Activated CD4-positive, alpha-beta T cell treated with anti-CD3 and anti-CD28 coated beads for 36 hours (primary cell): ENCODE measurements at regions of chr7 and their contacts with region 1.

Region 1: GRCh38 chr7:5193880-5194279 is 3.8 kb downstream of the WIPI2 start:
- DNase-seq: no peak
- ATAC-seq: no peak
- H3K4me3 Mint-ChIP-seq: no peak overlapping the region
- H3K27ac Mint-ChIP-seq: peak overlapping the region; percentile 6
- H3K4me1 Mint-ChIP-seq: peaks cover 21% of the 10 kb centered on the region
- H3K27me3 Mint-ChIP-seq: no peaks in the 10 kb centered on the region

Region 2: GRCh38 chr7:4973728-4974198 is 220.1 kb before region 1 on chr7:
- CTCF ChIA-PET with region 1: no interaction called
- POLR2A ChIA-PET with region 1: no interaction called
- intact Hi-C with region 1: loop called in 1 of 2 experiments (anchors 1 kb)
- DNase-seq: peak; percentile 96
- ATAC-seq: peak; percentile 98
- H3K4me3 Mint-ChIP-seq: peak overlapping the region; percentile 97
- H3K27ac Mint-ChIP-seq: peak overlapping the region; percentile 92
- H3K4me1 Mint-ChIP-seq: peaks cover 31% of the 10 kb centered on the region
- H3K27me3 Mint-ChIP-seq: no peaks in the 10 kb centered on the region

Region 3: GRCh38 chr7:5045558-5046396 is 148.1 kb before region 1 on chr7 and contains the start of gene RBAK:
- CTCF ChIA-PET with region 1: no interaction called
- POLR2A ChIA-PET with region 1: no interaction called
- intact Hi-C with region 1: loop called in 1 of 2 experiments (anchors 2 kb)
- DNase-seq: peak; percentile 94
- ATAC-seq: peak; percentile 100
- H3K4me3 Mint-ChIP-seq: peak within 1 kb of the TSS; percentile 91
- H3K27ac Mint-ChIP-seq: peak within 1 kb of the TSS; percentile 92
- H3K4me1 Mint-ChIP-seq: peaks cover 41% of the 10 kb centered on the region
- H3K27me3 Mint-ChIP-seq: no peaks in the 10 kb centered on the region
- total RNA-seq, gene RBAK: 12.4 to 12.7 TPM

Region 4: GRCh38 chr7:5139998-5140397 is 53.9 kb before region 1 on chr7:
- CTCF ChIA-PET with region 1: interaction called, 3 read pairs
- POLR2A ChIA-PET with region 1: no interaction called
- intact Hi-C with region 1: loop called in 1 of 2 experiments (anchors 1 kb)
- DNase-seq: peak; percentile 60
- ATAC-seq: no peak
- H3K4me3 Mint-ChIP-seq: no peak overlapping the region
- H3K27ac Mint-ChIP-seq: no peak overlapping the region
- H3K4me1 Mint-ChIP-seq: peaks cover 15% of the 10 kb centered on the region
- H3K27me3 Mint-ChIP-seq: no peaks in the 10 kb centered on the region

Region 5: GRCh38 chr7:5296611-5297226 is 102.8 kb after region 1 on chr7:
- CTCF ChIA-PET with region 1: no interaction called
- POLR2A ChIA-PET with region 1: no interaction called
- intact Hi-C with region 1: loop called in 1 of 2 experiments (anchors 1 kb)
- DNase-seq: peak; percentile 87
- ATAC-seq: peak; percentile 92
- H3K4me3 Mint-ChIP-seq: peak overlapping the region; percentile 72
- H3K27ac Mint-ChIP-seq: no peak overlapping the region
- H3K4me1 Mint-ChIP-seq: peaks cover 11% of the 10 kb centered on the region
- H3K27me3 Mint-ChIP-seq: peaks cover 8% of the 10 kb centered on the region